Activated B cell treated with CpG ODN at 0.5 μM for 24 hours (primary cell): ENCODE measurements at regions of chr13 and their contacts with region 1.

Region 1: GRCh38 chr13:26186118-26186870 is 35.8 kb downstream of the RNF6 start:
- DNase-seq: peak; percentile 94
- ATAC-seq: peak; percentile 84
- H3K4me3 Mint-ChIP-seq: peak overlapping the region; percentile 87
- H3K27ac Mint-ChIP-seq: peak overlapping the region; percentile 91
- H3K4me1 Mint-ChIP-seq: peaks cover 48% of the 10 kb centered on the region
- H3K27me3 Mint-ChIP-seq: no peaks in the 10 kb centered on the region
- CTCF ChIP-seq: no peak

Region 2: DNA sequence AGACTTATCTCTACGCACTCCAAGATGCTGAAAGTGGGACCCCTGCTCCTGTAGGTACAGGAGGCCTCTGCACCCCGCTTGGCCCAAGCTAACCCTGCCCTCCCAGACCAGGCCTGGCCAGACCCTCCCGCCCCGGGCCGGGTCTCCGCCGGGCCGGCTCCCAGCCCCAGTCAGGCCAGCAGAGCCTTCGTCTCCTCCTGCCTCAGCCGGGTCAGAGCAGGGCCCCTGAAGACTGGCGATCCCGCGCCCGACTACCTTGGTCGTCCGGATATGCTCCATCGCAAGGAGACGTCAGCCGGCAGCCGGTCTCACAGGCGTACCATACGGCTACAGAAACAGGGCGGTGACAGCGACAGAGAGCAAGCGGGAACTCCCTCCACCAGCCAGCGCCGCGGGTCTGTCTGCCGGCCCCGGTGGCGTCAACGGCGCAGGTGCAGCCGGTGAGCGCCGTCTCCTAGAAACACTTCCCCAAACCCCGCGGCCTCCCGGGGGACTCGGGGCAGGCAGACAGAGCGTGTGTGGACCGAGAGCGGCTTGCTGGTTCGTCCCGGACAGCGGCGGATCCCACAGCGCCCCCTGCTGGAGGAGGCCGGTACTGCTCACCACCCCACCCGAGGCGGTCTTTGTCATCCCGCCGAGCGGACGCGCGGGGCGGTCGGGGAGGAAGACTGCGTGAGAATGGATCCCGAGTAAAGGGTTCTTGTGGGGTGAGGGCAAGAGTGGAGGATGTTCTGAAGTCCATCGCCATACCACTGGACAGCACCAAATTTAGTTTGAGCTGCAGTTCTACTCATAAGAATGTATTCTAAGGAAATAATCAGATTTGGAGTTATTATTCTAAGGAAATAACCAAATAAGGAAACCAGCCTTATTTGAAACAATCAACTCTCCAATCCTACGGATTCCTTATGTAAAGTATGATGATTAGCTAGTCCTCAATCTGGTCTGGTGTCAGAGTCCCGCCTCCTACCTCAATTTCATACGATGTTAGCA is 899.0 kb before region 1 on chr13 and contains the start of gene MTMR6:
- CTCF ChIA-PET with region 1: no interaction called
- POLR2A ChIA-PET with region 1: interaction called, 4 read pairs
- intact Hi-C with region 1: loop called (anchors 5 kb)
- DNase-seq: peak; percentile 99
- ATAC-seq: peak; percentile 87
- H3K4me3 Mint-ChIP-seq: peak within 1 kb of the TSS; percentile 91
- H3K27ac Mint-ChIP-seq: peak within 1 kb of the TSS; percentile 95
- H3K4me1 Mint-ChIP-seq: peaks cover 40% of the 10 kb centered on the region
- H3K27me3 Mint-ChIP-seq: peaks cover 13% of the 10 kb centered on the region
- CTCF ChIP-seq: peak; percentile 95
- total RNA-seq, gene MTMR6: 18.3 and 19.8 TPM in 2 replicates

Region 3: GRCh38 chr13:26221721-26222519 is 35.6 kb after region 1 on chr13 and contains the start of gene RNF6:
- CTCF ChIA-PET with region 1: interaction called, 26 read pairs
- POLR2A ChIA-PET with region 1: interaction called, 125 read pairs
- intact Hi-C with region 1: loop called (anchors 1 kb)
- DNase-seq: peak; percentile 87
- ATAC-seq: peak; percentile 92
- H3K4me3 Mint-ChIP-seq: peak within 1 kb of the TSS; percentile 100
- H3K27ac Mint-ChIP-seq: peak within 1 kb of the TSS; percentile 100
- H3K4me1 Mint-ChIP-seq: peaks cover 36% of the 10 kb centered on the region
- H3K27me3 Mint-ChIP-seq: peaks cover 7% of the 10 kb centered on the region
- CTCF ChIP-seq: no peak
- total RNA-seq, gene RNF6: 47.5 and 48.3 TPM in 2 replicates

Region 4: DNA sequence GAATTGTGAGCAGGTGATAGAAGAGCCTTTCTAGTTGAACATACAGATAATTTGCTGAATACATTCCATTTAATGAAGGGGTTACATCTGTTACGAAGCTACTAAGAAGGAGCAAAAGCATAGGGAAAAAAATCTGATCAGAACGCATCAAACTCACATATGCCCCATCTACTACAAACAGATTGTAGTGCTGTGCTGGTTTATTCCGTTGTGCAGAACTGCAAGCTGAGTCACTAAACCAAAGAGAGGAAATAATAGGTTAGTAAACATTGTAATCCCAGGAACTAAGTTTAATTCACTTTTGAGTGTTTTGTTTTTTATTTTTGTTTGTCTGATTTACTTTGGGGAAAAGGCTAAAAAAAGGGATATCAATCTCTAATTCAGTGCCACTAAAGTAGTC is 203.9 kb after region 1 on chr13:
- CTCF ChIA-PET with region 1: interaction called, 4 read pairs
- POLR2A ChIA-PET with region 1: no interaction called
- intact Hi-C with region 1: loop called (anchors 10 kb)
- DNase-seq: no peak
- ATAC-seq: no peak
- H3K4me3 Mint-ChIP-seq: no peak overlapping the region
- H3K27ac Mint-ChIP-seq: no peak overlapping the region
- H3K4me1 Mint-ChIP-seq: no peaks in the 10 kb centered on the region
- H3K27me3 Mint-ChIP-seq: no peaks in the 10 kb centered on the region
- CTCF ChIP-seq: no peak

Region 5: DNA sequence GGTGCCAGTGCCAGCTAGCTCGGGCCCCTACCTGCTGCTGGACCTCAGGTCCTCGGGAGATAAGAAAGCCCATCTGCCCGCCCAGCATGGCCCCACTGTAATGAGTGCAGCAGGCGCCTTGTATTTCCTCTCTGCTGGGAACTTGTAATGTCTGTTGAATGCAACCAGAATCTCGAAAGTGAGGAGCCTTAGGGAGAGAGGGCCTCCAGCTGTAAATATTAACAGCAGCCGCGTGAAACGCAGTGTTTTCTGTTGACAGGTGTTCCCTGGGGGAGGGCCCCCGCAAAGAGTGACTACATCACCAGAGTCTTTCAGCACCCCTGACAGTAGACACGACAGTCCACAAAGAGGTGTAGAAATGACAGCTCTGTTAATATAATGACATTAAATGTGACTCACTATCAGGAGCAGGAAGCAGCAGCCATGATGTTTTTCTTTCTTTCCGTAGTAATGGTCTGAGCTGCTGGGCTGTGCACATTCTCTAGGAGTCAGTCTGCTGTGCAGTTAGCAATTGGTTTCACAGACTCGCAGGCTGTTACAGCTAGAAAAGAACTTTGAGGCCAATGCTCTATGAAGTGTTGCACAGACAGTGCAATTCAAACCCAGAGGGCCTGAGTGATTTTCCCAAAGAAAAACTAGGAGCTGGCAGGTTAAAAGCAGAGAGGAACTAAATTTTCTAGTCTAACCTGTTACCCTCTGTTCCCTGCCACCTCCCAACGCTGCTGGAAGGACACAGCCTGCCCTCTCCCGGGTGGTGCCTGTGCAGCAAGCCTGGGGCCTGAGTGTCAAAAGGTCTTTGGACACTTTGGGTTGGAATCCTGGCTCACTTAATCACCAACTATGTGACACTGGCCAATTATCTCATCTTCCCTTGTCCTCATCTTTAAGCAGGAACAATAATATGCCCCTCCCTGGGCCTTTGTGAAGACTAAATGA is 312.6 kb after region 1 on chr13:
- CTCF ChIA-PET with region 1: interaction called, 114 read pairs
- POLR2A ChIA-PET with region 1: interaction called, 31 read pairs
- intact Hi-C with region 1: no loop called
- DNase-seq: no peak
- ATAC-seq: no peak
- H3K4me3 Mint-ChIP-seq: no peak overlapping the region
- H3K27ac Mint-ChIP-seq: no peak overlapping the region
- H3K4me1 Mint-ChIP-seq: no peaks in the 10 kb centered on the region
- H3K27me3 Mint-ChIP-seq: peaks cover 4% of the 10 kb centered on the region
- CTCF ChIP-seq: no peak

Region 6: GRCh38 chr13:26656919-26657318 is 470.6 kb after region 1 on chr13:
- CTCF ChIA-PET with region 1: no interaction called
- POLR2A ChIA-PET with region 1: no interaction called
- intact Hi-C with region 1: no loop called
- DNase-seq: no peak
- ATAC-seq: no peak
- H3K4me3 Mint-ChIP-seq: no peak overlapping the region
- H3K27ac Mint-ChIP-seq: no peak overlapping the region
- H3K4me1 Mint-ChIP-seq: no peaks in the 10 kb centered on the region
- H3K27me3 Mint-ChIP-seq: peaks cover 3% of the 10 kb centered on the region
- CTCF ChIP-seq: no peak

Region 7: GRCh38 chr13:26698392-26699196 is 512.3 kb after region 1 on chr13:
- CTCF ChIA-PET with region 1: interaction called, 93 read pairs
- POLR2A ChIA-PET with region 1: interaction called, 7 read pairs
- intact Hi-C with region 1: no loop called
- DNase-seq: peak; percentile 72
- ATAC-seq: peak; percentile 87
- H3K4me3 Mint-ChIP-seq: no peak overlapping the region
- H3K27ac Mint-ChIP-seq: no peak overlapping the region
- H3K4me1 Mint-ChIP-seq: peaks cover 4% of the 10 kb centered on the region
- H3K27me3 Mint-ChIP-seq: peaks cover 7% of the 10 kb centered on the region
- CTCF ChIP-seq: peak; percentile 30

Region 8: GRCh38 chr13:26929971-26930730 is 743.9 kb after region 1 on chr13:
- CTCF ChIA-PET with region 1: no interaction called
- POLR2A ChIA-PET with region 1: no interaction called
- intact Hi-C with region 1: loop called (anchors 5 kb)
- DNase-seq: peak; percentile 60
- ATAC-seq: peak; percentile 64
- H3K4me3 Mint-ChIP-seq: no peak overlapping the region
- H3K27ac Mint-ChIP-seq: no peak overlapping the region
- H3K4me1 Mint-ChIP-seq: no peaks in the 10 kb centered on the region
- H3K27me3 Mint-ChIP-seq: peaks cover 8% of the 10 kb centered on the region
- CTCF ChIP-seq: peak; percentile 95

Region 9: DNA sequence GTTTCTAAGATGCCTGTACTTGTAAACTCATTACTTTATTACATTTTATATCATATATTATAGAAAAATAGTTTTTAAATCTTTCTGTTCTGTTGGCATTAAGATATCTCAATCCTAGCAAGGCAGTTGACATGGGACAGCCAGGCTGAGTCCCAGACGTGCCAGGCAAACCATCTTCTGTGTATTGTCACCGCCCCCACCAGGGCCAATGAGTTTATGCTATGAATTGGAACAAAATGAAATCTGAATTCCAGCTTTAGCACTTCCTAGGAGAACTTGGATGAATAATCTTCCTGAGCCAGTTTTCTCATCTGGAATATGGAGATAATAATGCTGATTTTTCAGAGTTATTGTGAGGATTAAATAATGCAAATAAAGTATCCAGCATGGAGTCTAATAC is 1526.1 kb after region 1 on chr13:
- CTCF ChIA-PET with region 1: no interaction called
- POLR2A ChIA-PET with region 1: no interaction called
- intact Hi-C with region 1: no loop called
- DNase-seq: no peak
- ATAC-seq: no peak
- H3K4me3 Mint-ChIP-seq: no peak overlapping the region
- H3K27ac Mint-ChIP-seq: no peak overlapping the region
- H3K4me1 Mint-ChIP-seq: no peaks in the 10 kb centered on the region
- H3K27me3 Mint-ChIP-seq: peaks cover 13% of the 10 kb centered on the region
- CTCF ChIP-seq: no peak